ENCODE measurements at regions of chr20 and their contacts with region 1.

Region 1: GRCh38 chr20:833450-834150 is at the start of gene FAM110A:
- DNase-seq: peak; percentile 97
- ATAC-seq: peak; percentile 94
- H3K4me3 Mint-ChIP-seq: peak within 1 kb of the TSS; percentile 90
- H3K27ac Mint-ChIP-seq: peak within 1 kb of the TSS; percentile 84
- H3K4me1 Mint-ChIP-seq: peaks cover 43% of the 10 kb centered on the region
- H3K27me3 Mint-ChIP-seq: no peaks in the 10 kb centered on the region
- total RNA-seq, gene FAM110A: 34.3 to 37.0 TPM

Region 2: DNA sequence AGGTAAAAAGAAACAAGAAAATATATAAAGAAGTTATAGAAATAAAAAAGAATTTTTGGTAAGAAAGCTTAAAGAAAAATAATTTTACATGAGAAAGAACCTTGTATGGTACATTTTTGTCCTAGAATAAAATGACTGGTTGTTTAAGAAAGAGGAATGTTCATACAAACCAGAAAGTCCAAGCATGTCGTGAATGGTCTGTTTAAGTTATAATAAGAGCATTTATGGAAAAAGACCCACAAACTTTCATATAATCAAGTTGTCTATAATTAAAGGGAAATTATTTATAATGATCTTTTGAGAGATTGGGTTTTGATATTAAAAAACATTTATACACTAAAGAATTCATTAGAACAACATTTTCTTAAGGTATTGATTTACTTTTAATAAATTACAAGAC is 27.9 kb before region 1 on chr20:
- CTCF ChIA-PET with region 1: no interaction called
- DNase-seq: no peak
- ATAC-seq: no peak
- H3K4me3 Mint-ChIP-seq: no peak overlapping the region
- H3K27ac Mint-ChIP-seq: no peak overlapping the region
- H3K4me1 Mint-ChIP-seq: no peaks in the 10 kb centered on the region
- H3K27me3 Mint-ChIP-seq: peaks cover 17% of the 10 kb centered on the region

Region 3: DNA sequence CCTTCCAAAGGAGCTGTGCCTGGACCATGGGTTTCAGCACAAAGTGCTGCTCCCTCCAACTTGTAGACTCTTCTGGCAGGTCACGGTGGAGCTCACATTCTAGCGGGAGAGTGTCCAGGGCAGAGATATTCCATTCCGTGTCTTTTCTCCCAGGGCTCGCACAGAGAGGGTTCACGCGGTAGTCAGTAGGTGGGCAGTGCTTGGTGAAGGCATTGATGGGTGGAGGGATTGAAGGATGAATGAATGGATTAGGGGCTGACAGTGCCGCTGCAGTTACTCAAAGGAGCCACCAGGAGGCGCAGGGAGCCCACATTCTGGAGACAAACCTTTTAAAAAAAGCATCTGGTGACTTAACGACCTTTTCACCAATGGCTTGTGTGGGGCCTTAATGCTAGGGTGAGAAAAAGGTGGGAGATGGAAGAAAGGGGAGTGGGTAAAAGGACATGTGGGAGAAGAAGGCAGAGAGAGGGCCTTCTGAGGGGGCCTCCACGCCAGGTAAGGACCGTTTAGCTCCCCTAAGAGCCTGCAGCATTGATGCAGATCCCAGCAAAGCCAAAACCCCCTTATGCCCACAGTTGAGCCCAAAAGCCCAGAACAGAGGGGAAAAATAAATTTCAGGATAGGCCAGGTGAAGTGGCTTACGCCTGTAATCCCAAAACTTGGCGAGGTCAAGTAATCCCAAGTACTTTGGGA is 17.5 kb before region 1 on chr20:
- CTCF ChIA-PET with region 1: interaction called, 10 read pairs
- DNase-seq: peak; percentile 70
- ATAC-seq: peak; percentile 48
- H3K4me3 Mint-ChIP-seq: no peak overlapping the region
- H3K27ac Mint-ChIP-seq: no peak overlapping the region
- H3K4me1 Mint-ChIP-seq: peaks cover 5% of the 10 kb centered on the region
- H3K27me3 Mint-ChIP-seq: peaks cover 5% of the 10 kb centered on the region

Region 4: GRCh38 chr20:844473-845225 is 11.0 kb after region 1 on chr20:
- CTCF ChIA-PET with region 1: interaction called, 37 read pairs
- DNase-seq: peak; percentile 95
- ATAC-seq: peak; percentile 90
- H3K4me3 Mint-ChIP-seq: peak overlapping the region; percentile 84
- H3K27ac Mint-ChIP-seq: peak overlapping the region; percentile 78
- H3K4me1 Mint-ChIP-seq: peaks cover 52% of the 10 kb centered on the region
- H3K27me3 Mint-ChIP-seq: no peaks in the 10 kb centered on the region